PC-9 (cell line): ENCODE measurements at regions of chr3 and their contacts with region 1.

Region 1: GRCh38 chr3:181899702-181900101 is 188.0 kb downstream of the SOX2 start:
- DNase-seq: peak; percentile 64 to 66
- H3K4me3 ChIP-seq: no peak overlapping the region
- H3K27ac ChIP-seq: no peak overlapping the region
- H3K4me1 ChIP-seq: no peaks in the 10 kb centered on the region
- H3K27me3 ChIP-seq: no peaks in the 10 kb centered on the region
- CTCF ChIP-seq: no peak

Region 2: GRCh38 chr3:181739628-181740027 is 160.1 kb before region 1 on chr3:
- CTCF ChIA-PET with region 1: no interaction called
- POLR2A ChIA-PET with region 1: no interaction called
- intact Hi-C with region 1: loop called (anchors 1 kb)
- DNase-seq: peak; percentile 48 to 77
- H3K4me3 ChIP-seq: no peak overlapping the region
- H3K27ac ChIP-seq: peak overlapping the region; percentile 10
- H3K4me1 ChIP-seq: peaks cover 14% of the 10 kb centered on the region
- H3K27me3 ChIP-seq: no peaks in the 10 kb centered on the region
- CTCF ChIP-seq: no peak

Region 3: DNA sequence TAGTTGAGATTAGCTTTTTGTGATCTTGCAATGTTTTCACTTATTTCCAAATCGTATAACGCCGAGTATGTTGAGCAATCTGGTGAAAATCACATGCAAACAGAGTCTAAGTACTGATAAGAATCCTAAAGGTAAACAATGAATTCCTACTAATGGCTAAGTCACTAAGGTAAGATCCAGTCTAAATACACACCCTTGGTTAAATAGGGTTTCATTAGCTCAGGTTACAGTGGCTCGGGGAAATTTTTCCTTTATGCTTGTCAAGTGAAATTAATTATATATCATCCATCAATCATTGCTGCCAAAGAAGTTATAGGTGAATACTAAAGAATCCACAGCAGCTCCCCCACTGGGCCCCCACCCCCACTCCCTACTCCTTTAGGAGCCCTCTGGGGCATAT is 48.6 kb before region 1 on chr3:
- CTCF ChIA-PET with region 1: no interaction called
- POLR2A ChIA-PET with region 1: no interaction called
- intact Hi-C with region 1: loop called (anchors 1 kb)
- DNase-seq: peak; percentile 60 to 98
- H3K4me3 ChIP-seq: no peak overlapping the region; the same call in 1 of the 2 replicates
- H3K27ac ChIP-seq: peak overlapping the region; percentile 88
- H3K4me1 ChIP-seq: peaks cover 45% of the 10 kb centered on the region
- H3K27me3 ChIP-seq: no peaks in the 10 kb centered on the region
- CTCF ChIP-seq: no peak